HEK293 (cell line): ENCODE measurements at regions of chr11 and their contacts with region 1.

Region 1: DNA sequence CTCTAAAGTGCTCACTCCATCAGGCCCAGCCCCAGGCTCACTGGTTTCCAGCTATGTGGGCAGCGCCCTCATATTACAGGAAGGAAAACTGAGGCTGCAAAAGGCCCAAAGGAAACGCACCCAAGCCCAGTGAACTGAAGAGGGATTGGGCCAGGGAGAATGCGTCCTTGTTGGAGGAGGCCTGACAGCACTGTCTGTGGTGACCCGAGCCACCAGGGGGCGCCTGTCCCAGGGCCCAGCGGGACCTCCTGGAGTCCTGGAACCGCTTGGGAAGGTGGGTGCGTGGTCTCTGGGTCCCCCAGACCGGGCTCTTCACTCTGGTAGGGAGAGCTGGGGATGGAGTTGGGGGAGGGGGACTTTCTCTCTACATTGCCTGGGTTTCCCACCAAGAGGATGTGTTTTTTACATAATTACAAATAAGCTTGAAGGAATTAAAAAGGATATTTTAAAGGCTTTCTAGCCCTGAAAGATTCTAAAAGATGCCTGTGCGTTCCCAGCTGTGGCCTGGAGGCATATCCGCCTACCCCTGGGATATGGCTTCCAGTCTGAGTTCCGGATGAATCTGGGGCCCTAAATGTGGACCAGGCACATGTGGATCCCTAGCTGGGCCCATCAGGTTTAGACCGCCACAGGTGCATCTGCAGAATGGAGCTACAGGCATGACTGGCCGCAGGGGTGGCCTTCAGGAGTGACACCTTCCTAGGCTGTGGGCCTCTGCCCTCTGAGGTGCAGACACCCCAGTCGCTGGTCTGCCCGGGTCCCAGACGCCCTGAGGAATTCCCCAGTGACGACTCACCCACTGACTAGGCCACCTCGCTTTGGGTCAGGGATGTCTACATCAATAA is 4.2 kb downstream of the SPI1 start:
- H3K4me3 ChIP-seq: no peak overlapping the region
- H3K27ac ChIP-seq: no peak overlapping the region
- H3K4me1 ChIP-seq: no peaks in the 10 kb centered on the region
- CTCF ChIP-seq: peak; percentile 75

Region 2: DNA sequence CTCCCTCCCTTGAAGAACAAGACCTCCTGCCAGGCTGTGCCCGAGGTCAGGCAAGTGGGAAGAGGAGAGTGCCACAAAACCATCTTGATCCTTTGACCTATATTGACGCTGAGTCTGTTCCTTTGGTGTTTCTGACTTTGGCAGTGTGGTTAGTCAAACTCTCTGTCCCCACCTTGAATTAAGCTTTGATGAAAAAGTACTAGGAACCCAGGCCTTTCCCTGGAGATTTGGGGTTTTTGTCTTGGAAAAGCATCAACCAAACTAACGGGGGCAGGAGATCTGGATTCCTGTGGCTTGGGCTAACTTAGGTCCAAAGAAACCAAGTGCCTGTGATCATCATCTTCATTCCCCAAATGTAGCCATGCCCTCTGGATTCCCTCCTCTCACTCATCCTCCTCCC is 237.8 kb before region 1 on chr11:
- CTCF ChIA-PET with region 1: no interaction called
- POLR2A ChIA-PET with region 1: no interaction called
- H3K4me3 ChIP-seq: no peak overlapping the region
- H3K27ac ChIP-seq: no peak overlapping the region
- H3K4me1 ChIP-seq: no peaks in the 10 kb centered on the region
- CTCF ChIP-seq: no peak

Region 3: DNA sequence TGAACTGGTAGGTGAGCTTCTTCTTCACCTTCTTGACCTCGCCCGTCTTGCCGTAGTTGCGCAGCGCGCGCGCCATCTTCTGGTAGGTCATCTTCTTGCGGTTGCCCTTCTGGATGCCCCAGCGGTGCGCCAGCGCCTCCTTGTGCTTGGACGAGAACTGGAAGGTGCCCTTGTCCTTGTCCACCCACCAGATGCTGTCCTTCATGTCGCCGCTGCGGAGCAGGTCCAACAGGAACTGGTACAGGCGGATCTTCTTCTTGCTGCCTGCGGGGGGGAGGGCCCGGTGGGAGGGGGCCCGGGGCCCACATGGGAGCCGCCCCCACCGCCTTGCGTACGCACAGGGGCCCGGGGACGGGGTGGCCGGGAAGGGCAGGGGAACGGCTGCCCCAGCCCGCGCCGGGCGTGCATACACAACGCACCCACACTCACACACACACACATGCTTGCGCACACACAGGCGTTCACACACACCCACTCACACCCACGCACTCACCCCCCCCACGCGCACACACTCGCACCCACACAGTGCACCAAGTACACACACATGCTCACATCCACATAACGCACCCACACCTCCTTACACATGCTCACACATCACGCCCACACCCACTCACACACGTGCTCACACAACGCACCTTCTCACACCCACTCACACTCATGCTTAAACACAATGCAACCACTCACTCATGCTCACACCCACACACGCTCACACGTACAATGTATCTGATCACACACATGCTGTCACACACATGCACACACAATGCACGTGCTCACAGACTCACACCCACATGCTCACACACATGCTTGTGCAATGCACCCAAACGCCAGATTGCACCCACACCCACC is 18.6 kb before region 1 on chr11:
- CTCF ChIA-PET with region 1: interaction called, 10 read pairs
- POLR2A ChIA-PET with region 1: no interaction called
- H3K4me3 ChIP-seq: peak overlapping the region; percentile 18
- H3K27ac ChIP-seq: no peak overlapping the region
- H3K4me1 ChIP-seq: no peaks in the 10 kb centered on the region
- CTCF ChIP-seq: peak; percentile 98

Region 4: GRCh38 chr11:47391077-47391583 is 17.0 kb after region 1 on chr11:
- CTCF ChIA-PET with region 1: interaction called, 37 read pairs
- POLR2A ChIA-PET with region 1: interaction called, 3 read pairs
- H3K4me3 ChIP-seq: no peak overlapping the region
- H3K27ac ChIP-seq: no peak overlapping the region
- H3K4me1 ChIP-seq: no peaks in the 10 kb centered on the region
- CTCF ChIP-seq: no peak

Region 5: DNA sequence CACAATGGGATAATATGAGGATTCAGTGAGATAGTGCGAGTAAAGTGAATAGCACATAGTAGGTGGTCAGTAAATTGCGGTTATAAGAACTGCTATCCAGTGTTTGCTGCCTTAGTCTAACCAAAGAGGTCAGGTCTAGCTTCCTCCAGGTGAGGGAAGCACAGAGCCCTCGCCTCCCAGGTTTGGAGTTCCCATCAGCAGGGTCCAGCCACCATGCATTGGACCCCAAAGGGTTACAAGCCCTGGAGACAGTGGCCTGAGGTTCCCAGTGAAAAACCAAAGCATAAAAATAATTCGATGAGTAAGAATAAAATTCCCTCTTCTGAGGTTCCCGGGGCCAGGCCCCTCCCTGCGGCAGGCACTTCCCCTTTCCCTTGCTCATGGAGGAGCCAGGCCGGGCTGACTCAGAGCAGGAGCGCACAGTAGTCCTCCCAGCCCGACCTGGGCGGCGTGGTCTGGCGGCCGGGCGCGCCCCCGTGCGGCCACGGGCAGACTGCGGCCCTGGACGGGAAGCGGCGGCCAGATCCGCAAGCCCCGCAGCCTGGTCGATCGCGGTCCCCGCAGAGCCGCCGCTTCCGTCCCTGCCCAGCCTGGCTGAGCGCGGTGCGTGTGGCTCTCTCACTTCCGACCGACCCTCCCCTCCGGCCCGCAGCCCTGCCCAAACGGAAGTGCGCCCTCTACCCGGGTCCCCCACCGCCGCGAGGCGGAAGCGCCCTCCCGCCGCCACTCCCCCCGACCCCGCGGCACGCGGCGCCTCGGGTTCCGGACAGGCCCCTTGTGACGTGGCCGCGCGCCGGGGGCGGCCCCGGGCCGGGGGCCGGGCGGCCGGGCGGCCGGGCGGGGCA is 33.9 kb after region 1 on chr11 and contains the start of gene SLC39A13:
- CTCF ChIA-PET with region 1: interaction called, 32 read pairs
- POLR2A ChIA-PET with region 1: interaction called, 3 read pairs
- H3K4me3 ChIP-seq: peak within 1 kb of the TSS; percentile 86
- H3K27ac ChIP-seq: peak within 1 kb of the TSS; percentile 82
- H3K4me1 ChIP-seq: no peaks in the 10 kb centered on the region
- CTCF ChIP-seq: peak; percentile 61; the same call in 1 of the 2 replicates

Region 6: GRCh38 chr11:47616726-47617416 is 242.8 kb after region 1 on chr11:
- CTCF ChIA-PET with region 1: interaction called, 18 read pairs
- POLR2A ChIA-PET with region 1: no interaction called
- H3K4me3 ChIP-seq: no peak overlapping the region
- H3K27ac ChIP-seq: no peak overlapping the region
- H3K4me1 ChIP-seq: no peaks in the 10 kb centered on the region
- CTCF ChIP-seq: peak; percentile 62; the same call in 1 of the 2 replicates